CD4-positive, alpha-beta T cell (primary cell): ENCODE measurements at regions of chr14 and their contacts with region 1.

Region 1: GRCh38 chr14:69398053-69398817 is at the starts of genes ERH and SLC39A9:
- DNase-seq: peak; percentile 90 to 98 (median 93)
- ATAC-seq: peak; percentile 84
- H3K4me3 ChIP-seq: peak within 1 kb of the TSS; percentile 94
- H3K4me3 Mint-ChIP-seq: peak within 1 kb of the TSS; percentile 96
- H3K27ac ChIP-seq: peak within 1 kb of the TSS; percentile 82 to 92
- H3K27ac Mint-ChIP-seq: peak within 1 kb of the TSS; percentile 99
- H3K4me1 ChIP-seq: peaks cover 53% of the 10 kb centered on the region
- H3K4me1 Mint-ChIP-seq: peaks cover 85% of the 10 kb centered on the region
- H3K27me3 ChIP-seq: no peaks in the 10 kb centered on the region
- H3K27me3 Mint-ChIP-seq: no peaks in the 10 kb centered on the region
- CTCF ChIP-seq: no peak
- total RNA-seq, gene ERH: 87.0 to 96.3 TPM
- total RNA-seq, gene SLC39A9: 19.5 to 20.5 TPM

Region 2: GRCh38 chr14:67674481-67675169 is 1723.6 kb before region 1 on chr14 and contains the start of gene VTI1B:
- CTCF ChIA-PET with region 1: no interaction called
- POLR2A ChIA-PET with region 1: no interaction called
- intact Hi-C with region 1: loop called in 1 of 2 experiments (anchors 5 kb)
- DNase-seq: peak; percentile 57 to 89 (median 72)
- ATAC-seq: peak; percentile 91
- H3K4me3 ChIP-seq: peak within 1 kb of the TSS; percentile 83
- H3K4me3 Mint-ChIP-seq: peak within 1 kb of the TSS; percentile 91
- H3K27ac ChIP-seq: peak within 1 kb of the TSS; percentile 92 to 95
- H3K27ac Mint-ChIP-seq: peak within 1 kb of the TSS; percentile 89
- H3K4me1 ChIP-seq: peaks cover 33% of the 10 kb centered on the region
- H3K4me1 Mint-ChIP-seq: peaks cover 43% of the 10 kb centered on the region
- H3K27me3 ChIP-seq: no peaks in the 10 kb centered on the region
- H3K27me3 Mint-ChIP-seq: no peaks in the 10 kb centered on the region
- CTCF ChIP-seq: no peak
- total RNA-seq, gene VTI1B: 24.4 to 27.0 TPM

Region 3: DNA sequence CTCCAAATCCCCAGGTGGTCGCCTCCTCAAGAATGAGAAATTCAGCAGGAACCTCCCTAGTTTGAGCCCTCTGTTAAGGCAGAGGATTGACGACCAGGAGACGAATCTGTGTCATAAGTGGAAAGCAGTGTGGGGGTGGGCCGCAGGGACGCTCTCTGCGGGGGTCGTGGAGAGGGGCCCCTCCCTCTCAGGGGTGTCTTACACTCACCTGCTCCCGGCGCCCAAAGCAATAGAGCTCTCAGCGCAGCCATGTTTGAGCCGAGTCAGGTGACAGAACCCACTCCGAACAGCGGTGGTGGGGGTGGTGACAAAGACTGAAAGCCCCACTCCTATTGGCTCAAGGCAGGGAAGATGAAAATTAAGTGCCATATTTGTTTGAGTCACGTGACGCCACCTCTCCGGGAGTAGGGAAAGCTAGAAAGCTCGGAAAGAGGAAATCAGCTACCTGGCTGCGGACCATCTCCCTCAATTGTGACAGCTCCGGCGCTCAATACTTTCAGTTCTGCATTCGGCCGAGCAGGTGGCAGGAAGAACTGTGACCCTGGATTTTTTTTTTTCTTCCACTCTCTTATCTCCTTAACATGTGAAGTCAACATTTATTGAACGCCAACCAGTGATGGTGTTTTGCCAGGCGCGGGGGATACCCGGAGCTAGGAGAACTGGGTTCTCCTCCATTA is 1581.8 kb before region 1 on chr14 and contains the start of gene ZFYVE26:
- CTCF ChIA-PET with region 1: no interaction called
- POLR2A ChIA-PET with region 1: interaction called, 3 read pairs
- intact Hi-C with region 1: loop called in 1 of 2 experiments (anchors 10 kb)
- DNase-seq: peak; percentile 77 to 95 (median 82)
- ATAC-seq: peak; percentile 94
- H3K4me3 ChIP-seq: peak within 1 kb of the TSS; percentile 78
- H3K4me3 Mint-ChIP-seq: peak within 1 kb of the TSS; percentile 94
- H3K27ac ChIP-seq: peak within 1 kb of the TSS; percentile 67 to 74
- H3K27ac Mint-ChIP-seq: peak within 1 kb of the TSS; percentile 85
- H3K4me1 ChIP-seq: peaks cover 38% of the 10 kb centered on the region
- H3K4me1 Mint-ChIP-seq: peaks cover 68% of the 10 kb centered on the region
- H3K27me3 ChIP-seq: no peaks in the 10 kb centered on the region
- H3K27me3 Mint-ChIP-seq: no peaks in the 10 kb centered on the region
- CTCF ChIP-seq: no peak
- total RNA-seq, gene ZFYVE26: 20.5 to 23.2 TPM

Region 4: GRCh38 chr14:69191340-69192111 is 206.7 kb before region 1 on chr14 and contains the start of gene EXD2:
- CTCF ChIA-PET with region 1: no interaction called
- POLR2A ChIA-PET with region 1: interaction called, 11 read pairs
- intact Hi-C with region 1: no loop called
- DNase-seq: peak; percentile 47 to 85 (median 67)
- ATAC-seq: peak; percentile 76
- H3K4me3 ChIP-seq: peak within 1 kb of the TSS; percentile 86
- H3K4me3 Mint-ChIP-seq: peak within 1 kb of the TSS; percentile 97
- H3K27ac ChIP-seq: peak within 1 kb of the TSS; percentile 41 to 51
- H3K27ac Mint-ChIP-seq: peak within 1 kb of the TSS; percentile 95
- H3K4me1 ChIP-seq: peaks cover 14% of the 10 kb centered on the region
- H3K4me1 Mint-ChIP-seq: peaks cover 29% of the 10 kb centered on the region
- H3K27me3 ChIP-seq: no peaks in the 10 kb centered on the region
- H3K27me3 Mint-ChIP-seq: no peaks in the 10 kb centered on the region
- CTCF ChIP-seq: no peak
- total RNA-seq, gene EXD2: 6.6 to 7.0 TPM

Region 5: GRCh38 chr14:70359181-70360090 is 961.2 kb after region 1 on chr14 and contains the start of gene COX16:
- CTCF ChIA-PET with region 1: no interaction called
- POLR2A ChIA-PET with region 1: interaction called, 3 read pairs
- intact Hi-C with region 1: loop called in 1 of 2 experiments (anchors 2 kb)
- DNase-seq: peak; percentile 63 to 92 (median 74)
- ATAC-seq: peak; percentile 95
- H3K4me3 ChIP-seq: peak within 1 kb of the TSS; percentile 74
- H3K4me3 Mint-ChIP-seq: peak within 1 kb of the TSS; percentile 97
- H3K27ac ChIP-seq: peak within 1 kb of the TSS; percentile 32 to 53
- H3K27ac Mint-ChIP-seq: peak within 1 kb of the TSS; percentile 91
- H3K4me1 ChIP-seq: peaks cover 21% of the 10 kb centered on the region
- H3K4me1 Mint-ChIP-seq: peaks cover 53% of the 10 kb centered on the region
- H3K27me3 ChIP-seq: no peaks in the 10 kb centered on the region
- H3K27me3 Mint-ChIP-seq: no peaks in the 10 kb centered on the region
- CTCF ChIP-seq: no peak
- total RNA-seq, gene COX16: 11.7 to 13.3 TPM

Region 6: DNA sequence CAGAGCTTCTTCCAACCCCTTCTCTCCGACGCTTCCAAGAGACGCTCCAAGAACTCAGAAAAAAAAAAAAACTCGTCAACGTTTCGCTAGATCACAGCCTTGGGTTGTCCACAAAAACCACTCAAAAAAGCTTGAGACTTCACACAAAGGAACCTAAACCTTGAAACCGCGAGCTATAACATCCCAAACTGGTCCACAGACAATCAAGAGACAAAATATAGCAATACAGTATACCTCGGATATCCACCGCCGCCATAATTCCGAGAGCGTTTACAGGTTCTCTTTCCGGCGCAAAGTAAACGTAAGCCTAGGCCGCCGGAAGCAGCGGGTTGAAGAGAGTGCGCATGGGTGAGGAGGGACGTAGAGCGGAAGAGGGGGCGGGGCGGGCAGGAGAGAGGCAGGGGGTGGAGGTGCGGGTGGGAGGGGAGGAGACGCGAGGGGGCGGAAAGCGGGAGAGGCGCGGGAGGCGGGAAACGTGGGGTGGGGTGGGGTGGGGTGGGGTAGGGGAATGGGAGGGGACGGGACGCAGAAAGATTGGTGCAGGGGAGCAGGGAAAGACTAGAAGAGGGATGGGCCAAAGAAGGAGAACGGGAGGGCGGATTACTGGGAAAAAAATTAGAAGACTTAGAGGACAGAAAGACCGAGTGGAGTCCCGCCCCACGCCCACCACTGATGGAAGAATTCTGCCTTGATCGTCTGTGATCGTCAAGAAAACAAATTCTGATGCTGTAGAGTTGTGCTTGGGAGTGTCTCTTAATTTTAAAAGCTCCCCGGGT is 1202.3 kb after region 1 on chr14 and contains the start of gene MED6:
- CTCF ChIA-PET with region 1: no interaction called
- POLR2A ChIA-PET with region 1: no interaction called
- intact Hi-C with region 1: loop called in 1 of 2 experiments (anchors 10 kb)
- DNase-seq: peak; percentile 83 to 97 (median 91)
- ATAC-seq: peak; percentile 99
- H3K4me3 ChIP-seq: peak within 1 kb of the TSS; percentile 97
- H3K4me3 Mint-ChIP-seq: peak within 1 kb of the TSS; percentile 100
- H3K27ac ChIP-seq: peak within 1 kb of the TSS; percentile 79 to 92
- H3K27ac Mint-ChIP-seq: peak within 1 kb of the TSS; percentile 99
- H3K4me1 ChIP-seq: peaks cover 15% of the 10 kb centered on the region
- H3K4me1 Mint-ChIP-seq: peaks cover 37% of the 10 kb centered on the region
- H3K27me3 ChIP-seq: no peaks in the 10 kb centered on the region
- H3K27me3 Mint-ChIP-seq: peaks cover 5% of the 10 kb centered on the region
- CTCF ChIP-seq: no peak
- total RNA-seq, gene MED6: 90.2 to 97.2 TPM